ENCODE measurements at regions of chr17 and their contacts with region 1.

Region 1: DNA sequence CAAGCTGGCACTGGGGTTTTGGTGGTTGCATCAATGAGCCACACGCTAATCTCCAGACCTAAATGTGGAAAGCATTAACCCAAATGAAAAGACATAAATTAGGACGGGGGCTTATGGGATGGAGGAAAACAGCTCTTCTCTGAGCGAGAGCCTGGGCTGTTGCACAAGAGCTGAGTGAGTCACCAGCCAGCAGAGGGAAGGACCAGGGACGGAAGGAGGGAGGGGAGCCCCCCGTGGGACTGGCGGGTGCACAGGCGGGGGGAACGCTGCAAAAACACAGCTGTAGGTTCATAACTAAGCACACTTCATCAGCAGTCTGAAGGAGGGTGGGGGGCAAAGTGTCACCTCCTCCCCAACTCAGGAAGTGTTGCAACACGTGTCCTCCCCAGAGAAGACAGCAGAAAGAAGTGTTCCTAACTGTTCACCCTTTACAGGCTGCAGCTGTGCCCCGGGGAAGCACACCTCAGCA is 83.3 kb downstream of the GAS7 start:
- DNase-seq: peak; percentile 93
- H3K4me3 ChIP-seq: peak overlapping the region; percentile 44
- CTCF ChIP-seq: no peak

Region 2: GRCh38 chr17:10127819-10128425 is 12.8 kb after region 1 on chr17:
- CTCF ChIA-PET with region 1: interaction called, 8 read pairs
- POLR2A ChIA-PET with region 1: interaction called, 38 read pairs
- DNase-seq: peak; percentile 94
- H3K4me3 ChIP-seq: peak overlapping the region; percentile 12; the same call in 1 of the 2 replicates
- CTCF ChIP-seq: peak; percentile 7

Region 3: DNA sequence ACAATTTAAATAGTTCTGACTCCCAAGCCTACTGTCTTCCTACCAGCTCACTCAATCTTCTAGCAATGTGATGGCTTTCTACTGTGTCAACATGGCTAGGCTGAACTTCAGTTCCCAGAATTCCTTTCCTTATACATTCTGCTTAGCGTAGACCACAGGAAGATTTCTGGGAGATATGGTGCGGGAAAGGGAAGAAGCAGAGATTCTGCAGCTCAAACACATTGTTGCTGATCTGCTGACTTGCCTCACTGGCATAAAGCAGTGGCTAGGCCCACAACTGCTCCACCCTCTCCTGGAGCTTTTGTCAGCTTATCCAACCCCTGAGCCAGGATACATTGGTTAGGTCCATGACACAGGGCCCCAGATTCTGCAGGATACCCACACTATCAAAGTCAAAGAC is 24.5 kb after region 1 on chr17:
- CTCF ChIA-PET with region 1: no interaction called
- POLR2A ChIA-PET with region 1: no interaction called
- DNase-seq: no peak
- H3K4me3 ChIP-seq: no peak overlapping the region
- CTCF ChIP-seq: no peak